PC-9 (cell line): ENCODE measurements at regions of chr10 and their contacts with region 1.

Region 1: DNA sequence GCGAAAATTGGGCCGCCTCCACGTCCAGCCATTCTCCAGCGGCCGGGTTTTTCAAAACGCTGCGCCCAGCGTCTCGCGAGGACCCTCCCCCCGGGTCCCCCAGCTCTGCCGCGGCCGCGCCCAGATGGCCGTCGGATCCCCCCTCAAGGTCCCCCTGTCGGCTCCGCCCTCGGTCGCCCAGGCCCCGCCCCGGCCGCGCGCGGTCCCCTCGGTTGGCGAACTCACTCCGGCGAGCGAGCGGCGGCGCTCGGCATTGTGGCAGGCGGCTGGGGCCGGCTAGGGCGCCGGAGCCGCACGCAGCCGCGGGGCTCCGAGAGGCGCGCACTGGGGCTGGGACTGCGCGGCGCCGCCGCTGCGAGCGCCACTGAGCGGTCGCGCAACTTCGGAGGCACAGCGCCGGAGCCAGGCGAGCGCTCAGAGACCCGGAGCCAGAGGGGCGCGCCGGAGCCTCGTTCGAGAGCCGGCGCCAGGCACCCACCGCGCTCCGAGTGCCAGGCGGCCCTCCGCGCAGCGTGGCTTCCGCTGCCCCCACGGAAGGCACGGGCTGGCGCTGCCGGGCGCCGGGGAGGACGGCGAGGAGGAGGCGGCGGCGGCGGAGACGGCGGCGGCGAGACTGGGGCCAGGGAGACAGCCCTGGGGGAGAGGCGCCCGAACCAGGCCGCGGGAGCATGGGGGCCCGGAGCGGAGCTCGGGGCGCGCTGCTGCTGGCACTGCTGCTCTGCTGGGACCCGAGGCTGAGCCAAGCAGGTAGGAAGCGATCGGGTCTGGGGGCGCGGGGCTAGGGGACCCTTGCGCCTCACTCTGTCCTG is at the start of gene UNC5B:
- DNase-seq: peak; percentile 71 to 92
- H3K4me3 ChIP-seq: peak within 1 kb of the TSS; percentile 95
- H3K27ac ChIP-seq: no peak within 1 kb of the TSS
- H3K4me1 ChIP-seq: peaks cover 24% of the 10 kb centered on the region
- H3K27me3 ChIP-seq: peaks cover 28% of the 10 kb centered on the region
- CTCF ChIP-seq: no peak
- total RNA-seq, gene UNC5B: 1.7 and 2.7 TPM in 2 replicates

Region 2: GRCh38 chr10:70549962-70550458 is 662.5 kb before region 1 on chr10:
- CTCF ChIA-PET with region 1: no interaction called
- POLR2A ChIA-PET with region 1: no interaction called
- intact Hi-C with region 1: loop called (anchors 5 kb)
- DNase-seq: peak; percentile 47 to 76
- H3K4me3 ChIP-seq: no peak overlapping the region
- H3K27ac ChIP-seq: no peak overlapping the region
- H3K4me1 ChIP-seq: no peaks in the 10 kb centered on the region
- H3K27me3 ChIP-seq: no peaks in the 10 kb centered on the region
- CTCF ChIP-seq: peak; percentile 98

Region 3: GRCh38 chr10:70920565-70920964 is 292.0 kb before region 1 on chr10:
- CTCF ChIA-PET with region 1: interaction called, 12 read pairs
- POLR2A ChIA-PET with region 1: no interaction called
- intact Hi-C with region 1: loop called (anchors 1 kb)
- DNase-seq: peak; percentile 87 to 93
- H3K4me3 ChIP-seq: no peak overlapping the region
- H3K27ac ChIP-seq: no peak overlapping the region
- H3K4me1 ChIP-seq: peaks cover 27% of the 10 kb centered on the region
- H3K27me3 ChIP-seq: peaks cover 27% of the 10 kb centered on the region
- CTCF ChIP-seq: 0 out of 2 replicates have a peak, but pooled peaks have one; percentile 20

Region 4: GRCh38 chr10:70931168-70931815 is 281.2 kb before region 1 on chr10:
- CTCF ChIA-PET with region 1: no interaction called
- POLR2A ChIA-PET with region 1: no interaction called
- intact Hi-C with region 1: loop called (anchors 2 kb)
- DNase-seq: peak; percentile 70 to 73
- H3K4me3 ChIP-seq: no peak overlapping the region
- H3K27ac ChIP-seq: no peak overlapping the region
- H3K4me1 ChIP-seq: peaks cover 14% of the 10 kb centered on the region
- H3K27me3 ChIP-seq: peaks cover 12% of the 10 kb centered on the region
- CTCF ChIP-seq: no peak

Region 5: DNA sequence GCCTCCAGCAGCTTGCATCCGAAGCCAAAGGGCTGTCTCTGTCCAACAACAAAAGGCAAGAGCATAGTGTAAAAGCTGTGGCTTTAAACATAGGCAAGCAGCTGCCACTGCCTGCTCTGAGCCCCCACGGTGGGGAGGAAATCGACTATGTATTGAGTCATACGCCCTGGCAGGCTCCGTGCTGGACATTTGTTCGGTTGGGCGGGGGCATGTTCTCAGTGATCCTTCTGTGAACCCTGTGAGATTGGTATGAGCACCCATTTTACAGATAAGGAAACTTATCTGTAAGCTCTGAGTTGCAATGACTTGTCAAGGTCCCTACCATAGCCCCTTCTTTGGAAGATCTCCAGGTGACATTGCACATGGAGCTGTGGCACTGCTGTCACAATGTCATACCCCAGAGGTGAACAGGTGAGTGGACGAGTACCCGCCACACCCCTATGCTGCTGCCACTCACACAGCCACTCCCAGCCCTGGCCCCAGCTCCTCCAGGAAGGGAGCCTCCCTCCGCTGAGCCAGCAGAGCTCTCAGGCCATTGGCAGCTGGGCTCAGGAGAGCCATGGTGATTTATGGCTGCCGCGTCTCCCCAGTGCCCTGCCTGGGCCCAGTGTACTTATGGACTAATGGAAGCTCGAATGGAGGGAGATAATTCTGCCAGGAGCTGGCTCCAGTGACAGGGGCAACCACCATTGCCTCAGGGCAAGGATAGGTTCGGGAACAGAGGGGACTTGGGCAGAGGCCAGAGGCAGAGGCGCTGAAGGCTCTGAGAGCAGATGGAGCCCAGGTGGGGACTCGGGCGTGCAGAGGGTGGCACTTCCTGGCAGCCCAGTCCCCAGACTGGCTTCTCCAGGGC is 43.5 kb after region 1 on chr10:
- CTCF ChIA-PET with region 1: no interaction called
- POLR2A ChIA-PET with region 1: no interaction called
- intact Hi-C with region 1: loop called (anchors 5 kb)
- DNase-seq: peak; percentile 83 to 86
- H3K4me3 ChIP-seq: peak overlapping the region; percentile 43; the same call in 1 of the 2 replicates
- H3K27ac ChIP-seq: peak overlapping the region; percentile 25
- H3K4me1 ChIP-seq: peaks cover 74% of the 10 kb centered on the region
- H3K27me3 ChIP-seq: no peaks in the 10 kb centered on the region
- CTCF ChIP-seq: no peak

Region 6: GRCh38 chr10:71285180-71285545 is 72.6 kb after region 1 on chr10:
- CTCF ChIA-PET with region 1: interaction called, 5 read pairs
- POLR2A ChIA-PET with region 1: no interaction called
- intact Hi-C with region 1: loop called (anchors 1 kb)
- DNase-seq: peak; percentile 41 to 55
- H3K4me3 ChIP-seq: no peak overlapping the region
- H3K27ac ChIP-seq: no peak overlapping the region
- H3K4me1 ChIP-seq: no peaks in the 10 kb centered on the region
- H3K27me3 ChIP-seq: no peaks in the 10 kb centered on the region
- CTCF ChIP-seq: peak; percentile 91